HEK293T (cell line): ENCODE measurements at regions of chr17 and their contacts with region 1.

Region 1: DNA sequence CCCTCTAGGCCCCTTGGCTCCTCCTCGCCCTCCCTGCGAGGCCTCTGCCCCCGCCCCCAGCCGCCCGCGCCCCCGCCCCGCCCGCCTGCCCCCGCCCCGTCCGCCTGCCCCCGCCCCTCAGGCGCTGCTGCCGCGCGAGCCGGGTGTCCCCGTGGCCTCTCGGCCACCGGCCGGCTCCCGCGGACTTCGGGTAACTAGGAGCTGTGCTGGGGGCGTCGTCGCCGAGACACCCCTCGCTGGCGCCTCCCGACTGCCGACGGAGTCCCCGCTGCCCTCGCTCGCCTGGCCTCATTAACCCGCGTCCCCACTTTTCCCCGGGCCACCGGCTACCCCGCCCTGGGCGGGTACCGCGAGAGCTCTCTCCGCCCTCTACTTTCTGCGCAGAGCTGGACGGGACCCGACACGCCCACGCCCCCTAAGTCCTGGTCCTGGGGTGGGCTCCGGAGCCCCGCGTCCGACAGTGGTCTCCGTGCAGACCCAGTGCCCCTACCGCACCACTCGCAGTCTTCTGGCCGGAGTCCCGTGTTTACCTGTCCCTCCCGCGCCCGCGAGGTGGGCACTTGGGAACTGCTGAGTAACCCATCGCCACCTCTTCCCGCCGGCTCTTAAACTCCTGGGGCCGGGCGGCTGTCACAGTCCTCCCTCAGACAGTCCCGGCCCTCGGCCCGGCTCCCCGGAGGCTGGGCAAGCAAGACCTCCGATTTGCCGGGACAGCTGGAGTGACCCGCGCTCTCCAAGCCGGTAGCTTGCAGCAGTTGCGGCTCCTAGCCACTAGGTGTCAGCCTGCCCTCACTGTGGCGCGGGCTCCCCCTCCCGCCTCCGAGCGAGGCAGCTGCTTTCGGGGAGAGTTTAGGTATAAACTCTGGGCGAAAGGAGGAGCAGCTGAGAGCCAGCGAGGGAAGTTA is at the start of gene TLCD1:
- DNase-seq: peak; percentile 57

Region 2: DNA sequence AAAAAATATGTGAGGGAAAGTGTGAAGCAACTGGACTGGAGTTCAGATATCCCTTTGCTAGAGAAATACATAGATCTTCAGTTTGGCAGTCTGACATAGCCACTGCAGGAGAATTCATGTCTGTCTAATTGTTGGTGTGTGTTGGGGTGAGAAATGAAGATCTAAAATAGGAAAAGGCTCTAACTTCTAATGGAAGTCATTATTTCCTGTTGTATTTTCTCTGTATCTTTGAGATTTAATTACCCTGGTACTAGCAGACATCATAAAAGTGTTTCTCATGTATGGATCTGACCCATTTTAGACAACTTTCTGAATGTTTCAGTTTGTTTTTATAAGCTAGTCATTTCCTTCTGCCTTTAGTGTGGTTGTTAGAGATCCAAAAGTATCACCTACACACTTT is 555.7 kb before region 1 on chr17:
- CTCF ChIA-PET with region 1: no interaction called
- POLR2A ChIA-PET with region 1: no interaction called
- DNase-seq: no peak

Region 3: DNA sequence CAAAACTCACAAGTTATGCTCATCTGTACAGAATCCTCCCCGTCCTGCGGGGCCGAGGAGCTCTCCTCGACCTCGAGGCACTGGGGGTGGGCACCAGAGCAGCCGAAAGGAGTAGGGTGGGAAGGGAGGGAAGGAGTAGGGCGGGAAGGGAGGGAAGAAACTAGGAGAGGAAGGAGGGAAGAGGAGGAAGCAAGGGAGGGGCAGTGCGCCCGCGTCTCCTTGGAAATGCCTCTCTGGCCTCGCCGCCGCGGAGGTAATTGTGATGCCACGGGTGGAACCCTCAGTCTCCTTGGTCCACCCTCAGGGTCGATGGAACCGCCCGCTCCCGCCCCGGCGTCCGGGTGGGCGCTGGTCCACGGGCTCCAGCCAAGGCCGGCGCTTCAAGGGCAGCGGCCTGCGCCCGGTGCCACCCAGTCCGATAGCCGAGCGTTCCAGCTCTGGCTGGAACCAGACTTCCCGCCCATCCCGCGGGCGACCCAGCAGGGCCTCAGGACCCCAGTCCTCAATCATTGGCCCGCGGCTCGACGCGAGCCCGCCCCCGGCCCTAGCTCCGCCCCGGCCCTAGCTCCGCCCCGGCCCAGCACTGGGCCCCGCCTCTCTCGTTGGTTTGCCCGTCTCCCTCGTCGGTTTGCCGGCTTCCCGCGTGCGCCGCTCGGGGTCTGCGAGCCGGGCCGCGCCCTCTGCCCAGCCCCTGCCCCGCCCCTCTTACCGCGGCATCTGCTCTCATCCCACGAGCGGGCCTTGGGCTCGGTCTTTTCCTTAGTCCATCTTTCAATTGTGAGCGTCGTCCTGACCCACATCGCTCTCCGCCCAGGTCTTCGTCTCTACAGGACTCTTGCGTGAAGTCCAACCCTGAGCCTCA is 15.4 kb before region 1 on chr17:
- CTCF ChIA-PET with region 1: interaction called, 14 read pairs
- POLR2A ChIA-PET with region 1: interaction called, 309 read pairs
- DNase-seq: peak; percentile 85

Region 4: DNA sequence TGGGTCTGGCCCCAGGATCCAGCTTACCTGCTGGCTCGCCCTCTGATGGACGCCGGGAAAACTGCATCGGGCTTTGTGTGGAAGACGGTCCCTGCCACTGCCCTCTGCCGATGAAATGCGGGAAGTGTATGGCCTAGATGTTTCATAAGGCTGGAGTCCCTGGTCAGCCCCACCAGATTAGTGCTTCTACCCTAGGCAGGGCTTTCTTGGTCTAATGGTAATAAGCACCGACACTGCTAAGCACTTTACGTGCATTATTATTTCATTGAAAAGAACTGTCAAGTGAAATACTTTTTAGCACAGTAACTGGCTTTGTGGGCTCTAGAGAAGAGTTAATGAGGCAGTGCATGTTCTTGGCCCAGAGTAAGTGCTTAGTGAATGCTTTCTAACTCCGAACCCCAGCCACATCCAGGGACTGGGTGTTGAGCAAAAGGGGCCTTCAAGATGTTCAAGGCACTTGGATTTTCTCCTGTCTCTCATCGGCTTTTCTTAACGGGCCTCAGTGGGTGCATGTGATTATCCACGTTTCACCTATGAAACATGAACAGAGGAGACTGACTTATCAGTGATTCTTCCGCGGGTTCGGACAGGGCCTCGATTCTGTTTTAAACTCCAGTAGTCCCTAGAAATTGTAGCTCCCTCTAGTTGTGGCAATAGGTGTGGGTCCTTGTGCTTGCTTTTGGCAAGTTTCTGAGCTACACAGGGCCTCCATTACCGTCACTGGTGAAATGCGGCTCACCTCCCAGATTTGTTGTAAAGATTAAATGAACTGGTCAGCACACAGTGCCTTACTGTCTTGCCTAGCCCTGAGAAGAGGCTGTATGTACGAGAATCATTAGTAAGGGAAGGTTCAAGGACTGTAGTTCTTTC is 23.9 kb after region 1 on chr17:
- CTCF ChIA-PET with region 1: interaction called, 185 read pairs
- POLR2A ChIA-PET with region 1: interaction called, 409 read pairs
- DNase-seq: peak; percentile 70

Region 5: GRCh38 chr17:28773736-28774135 is 47.3 kb after region 1 on chr17:
- CTCF ChIA-PET with region 1: interaction called, 10 read pairs
- POLR2A ChIA-PET with region 1: no interaction called
- DNase-seq: no peak

Region 6: GRCh38 chr17:28896884-28897768 is 170.6 kb after region 1 on chr17 and contains the start of gene FLOT2:
- CTCF ChIA-PET with region 1: interaction called, 17 read pairs
- POLR2A ChIA-PET with region 1: interaction called, 35 read pairs
- DNase-seq: peak; percentile 55

Region 7: GRCh38 chr17:28908640-28909167 is 182.2 kb after region 1 on chr17:
- CTCF ChIA-PET with region 1: interaction called, 8 read pairs
- POLR2A ChIA-PET with region 1: interaction called, 16 read pairs
- DNase-seq: no peak

Region 8: DNA sequence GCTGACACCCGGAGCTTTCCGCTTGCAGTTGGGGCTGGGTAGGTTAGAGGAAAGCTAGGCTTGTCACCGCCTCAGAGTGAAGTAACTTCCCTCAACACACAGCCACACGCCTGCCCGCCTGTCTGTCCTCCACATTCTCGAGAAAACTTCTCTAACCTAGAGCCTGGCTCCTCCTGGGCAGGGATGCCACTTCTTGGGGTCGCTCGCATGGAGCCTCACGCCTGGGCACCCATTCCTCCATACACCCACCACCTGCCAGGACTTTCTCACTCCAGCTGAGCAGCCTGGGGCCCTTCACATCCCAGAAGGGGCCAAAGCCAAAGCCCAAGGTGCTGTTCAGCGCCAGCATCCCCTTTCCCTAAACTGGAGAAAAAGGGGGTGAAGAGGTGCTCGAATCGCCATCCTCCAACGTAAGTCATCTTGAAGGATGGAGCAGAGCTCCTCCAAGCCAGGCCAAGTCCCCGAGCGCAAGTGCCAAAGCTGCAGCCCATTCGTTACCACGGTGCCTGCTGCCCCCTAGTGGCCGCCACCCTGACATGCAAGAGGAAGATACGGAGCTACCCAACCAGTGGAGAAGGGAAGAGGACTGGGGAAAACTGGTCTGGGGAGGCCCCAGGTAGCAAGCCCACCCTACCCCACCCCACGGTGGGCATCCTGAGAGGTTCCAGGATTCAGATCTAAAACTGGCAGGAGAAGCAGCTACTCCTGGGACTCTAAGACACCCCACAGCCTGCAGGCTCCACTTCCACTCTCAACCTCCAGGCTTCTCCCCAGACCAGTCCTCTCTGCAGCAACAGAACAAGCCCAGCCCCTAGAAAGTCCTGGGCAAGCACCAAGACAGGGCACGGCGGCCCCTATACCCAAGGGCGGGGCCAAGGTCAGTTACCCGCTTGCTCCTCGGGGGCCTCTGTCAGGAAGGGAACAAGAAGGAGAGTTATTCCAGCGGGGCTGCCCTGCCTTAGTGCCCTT is 390.6 kb after region 1 on chr17:
- CTCF ChIA-PET with region 1: interaction called, 9 read pairs
- POLR2A ChIA-PET with region 1: interaction called, 12 read pairs
- DNase-seq: peak; percentile 74